Activated T-helper 1 cell treated with anti-CD3 and anti-CD28 coated beads, Interleukin-12 subunit alpha, Interleukin-12 subunit beta, Interleukin-2, Interleukin-4 antibody, amounts not matched to agents 30 ng/mL and 10 ng/mL and 1 ng/mL, durations not matched to agents 14 hours and 24 hours and 36 hours (primary cell): ENCODE measurements at regions of chr6 and their contacts with region 1.

Region 1: DNA sequence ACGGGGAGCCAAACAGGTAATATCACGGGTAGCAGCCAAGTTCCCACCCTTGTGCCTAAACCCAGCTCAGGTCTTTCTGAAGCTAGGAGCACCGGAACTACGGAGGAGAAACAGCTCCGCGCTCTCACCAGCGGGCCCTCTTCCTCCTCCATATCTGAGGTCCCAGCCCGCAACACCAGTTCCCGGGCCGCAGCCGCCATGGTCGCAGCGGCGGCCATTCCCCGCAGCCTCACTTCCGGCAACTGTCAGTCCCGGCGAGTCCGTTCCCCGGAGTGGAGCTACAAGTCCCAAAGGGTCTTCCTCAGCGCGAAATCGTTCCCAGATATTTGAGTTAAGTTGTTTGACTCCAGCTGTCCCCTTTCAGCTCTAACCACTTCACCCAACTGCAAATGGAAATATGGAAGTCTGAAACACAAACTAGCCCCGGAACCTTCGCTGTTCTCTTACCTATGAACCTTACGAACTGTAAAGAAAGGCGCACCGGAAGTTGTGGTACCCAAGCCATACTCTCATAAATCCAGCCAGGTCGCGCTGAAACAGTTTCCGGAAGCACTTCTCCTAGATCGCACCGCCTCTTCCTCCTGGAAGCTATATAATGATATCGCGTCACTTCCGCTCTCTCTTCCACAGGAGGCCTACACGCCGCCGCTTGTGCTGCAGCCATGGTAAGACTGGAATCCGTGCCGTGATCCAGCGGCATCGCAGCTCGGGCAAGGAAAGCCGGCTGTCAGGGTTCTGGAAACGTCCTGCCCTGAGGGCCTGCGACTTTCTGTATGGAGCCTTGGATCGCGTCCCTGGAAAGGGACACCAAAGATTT is at the starts of genes RPS18 and VPS52:
- DNase-seq: peak; percentile 89
- H3K4me3 Mint-ChIP-seq: peak within 1 kb of the TSS; percentile 97
- H3K27ac Mint-ChIP-seq: peak within 1 kb of the TSS; percentile 99
- H3K4me1 Mint-ChIP-seq: peaks cover 55% of the 10 kb centered on the region
- H3K27me3 Mint-ChIP-seq: no peaks in the 10 kb centered on the region
- total RNA-seq, gene RPS18: 2,930 and 2,946 TPM in 2 replicates
- total RNA-seq, gene VPS52: 59.8 and 63.5 TPM in 2 replicates

Region 2: GRCh38 chr6:31971993-31972708 is 1299.5 kb before region 1 on chr6 and contains the start of gene DXO:
- intact Hi-C with region 1: loop called (anchors 10 kb)
- DNase-seq: peak; percentile 97
- H3K4me3 Mint-ChIP-seq: peak within 1 kb of the TSS; percentile 80
- H3K27ac Mint-ChIP-seq: peak within 1 kb of the TSS; percentile 100
- H3K4me1 Mint-ChIP-seq: peaks cover 34% of the 10 kb centered on the region
- H3K27me3 Mint-ChIP-seq: no peaks in the 10 kb centered on the region
- total RNA-seq, gene DXO: 14.1 and 15.2 TPM in 2 replicates

Region 3: DNA sequence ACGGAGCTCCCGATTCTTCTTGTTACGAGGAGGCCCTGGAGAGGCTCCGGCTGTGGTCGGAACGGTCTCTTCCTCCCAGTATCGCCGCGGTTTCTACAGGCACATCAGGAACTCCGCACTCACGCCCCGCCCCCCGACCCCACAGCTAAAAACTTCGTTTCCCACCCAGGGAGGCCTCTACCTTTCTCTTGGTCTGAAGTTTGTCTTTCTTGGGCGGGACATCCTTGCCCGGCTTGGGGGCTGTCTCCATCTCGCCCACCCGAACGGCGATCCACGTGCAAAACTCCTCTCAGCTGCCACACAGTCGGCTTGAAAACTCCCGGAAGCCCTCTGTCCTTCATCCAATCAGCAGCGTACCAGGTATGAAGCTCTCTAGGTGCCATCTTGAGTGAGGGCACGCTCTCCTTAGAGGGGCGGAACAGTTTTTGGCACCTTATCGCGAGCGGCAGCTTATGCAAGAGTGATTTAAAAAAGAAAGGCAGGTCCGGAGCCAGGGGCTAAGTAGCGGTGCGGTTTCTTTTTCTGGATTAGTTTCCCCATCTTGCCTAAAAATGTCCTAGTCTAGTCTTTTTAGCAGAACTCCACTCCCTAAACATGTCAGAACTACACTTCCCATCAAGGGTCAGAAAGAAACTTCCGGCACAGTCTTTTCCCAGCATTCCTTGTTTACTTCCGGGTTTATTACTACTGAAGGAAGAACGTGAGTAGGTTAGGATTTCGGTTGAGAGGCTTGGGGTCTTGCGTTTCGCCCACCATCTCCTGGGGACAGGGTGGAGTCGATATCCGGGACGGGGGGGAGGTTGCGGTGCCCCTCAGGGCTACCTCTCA is 17.5 kb after region 1 on chr6 and contains the starts of genes PFDN6 and WDR46:
- intact Hi-C with region 1: loop called (anchors 1 kb)
- DNase-seq: peak; percentile 83
- H3K4me3 Mint-ChIP-seq: peak within 1 kb of the TSS; percentile 98
- H3K27ac Mint-ChIP-seq: peak within 1 kb of the TSS; percentile 86
- H3K4me1 Mint-ChIP-seq: peaks cover 31% of the 10 kb centered on the region
- H3K27me3 Mint-ChIP-seq: no peaks in the 10 kb centered on the region
- total RNA-seq, gene PFDN6: 122 and 126 TPM in 2 replicates
- total RNA-seq, gene WDR46: 113 and 123 TPM in 2 replicates

Region 4: GRCh38 chr6:33299237-33299944 is 27.7 kb after region 1 on chr6:
- intact Hi-C with region 1: loop called (anchors 1 kb)
- DNase-seq: peak; percentile 92
- H3K4me3 Mint-ChIP-seq: peak overlapping the region; percentile 95
- H3K27ac Mint-ChIP-seq: peak overlapping the region; percentile 99
- H3K4me1 Mint-ChIP-seq: peaks cover 38% of the 10 kb centered on the region
- H3K27me3 Mint-ChIP-seq: no peaks in the 10 kb centered on the region

Region 5: GRCh38 chr6:33312409-33313158 is 40.9 kb after region 1 on chr6:
- intact Hi-C with region 1: no loop called
- DNase-seq: peak; percentile 76
- H3K4me3 Mint-ChIP-seq: peak overlapping the region; percentile 97
- H3K27ac Mint-ChIP-seq: peak overlapping the region; percentile 99
- H3K4me1 Mint-ChIP-seq: peaks cover 60% of the 10 kb centered on the region
- H3K27me3 Mint-ChIP-seq: no peaks in the 10 kb centered on the region

Region 6: GRCh38 chr6:33323623-33323948 is 51.9 kb after region 1 on chr6:
- intact Hi-C with region 1: loop called (anchors 1 kb)
- DNase-seq: no peak
- H3K4me3 Mint-ChIP-seq: peak overlapping the region; percentile 97
- H3K27ac Mint-ChIP-seq: peak overlapping the region; percentile 98
- H3K4me1 Mint-ChIP-seq: peaks cover 55% of the 10 kb centered on the region
- H3K27me3 Mint-ChIP-seq: no peaks in the 10 kb centered on the region

Region 7: GRCh38 chr6:33410050-33410710 is 138.5 kb after region 1 on chr6:
- intact Hi-C with region 1: loop called (anchors 1 kb)
- DNase-seq: peak; percentile 99
- H3K4me3 Mint-ChIP-seq: peak overlapping the region; percentile 91
- H3K27ac Mint-ChIP-seq: peak overlapping the region; percentile 96
- H3K4me1 Mint-ChIP-seq: peaks cover 50% of the 10 kb centered on the region
- H3K27me3 Mint-ChIP-seq: no peaks in the 10 kb centered on the region

Region 8: GRCh38 chr6:33425668-33426577 is 154.3 kb after region 1 on chr6:
- intact Hi-C with region 1: loop called (anchors 5 kb)
- DNase-seq: peak; percentile 72
- H3K4me3 Mint-ChIP-seq: peak overlapping the region; percentile 89
- H3K27ac Mint-ChIP-seq: peak overlapping the region; percentile 92
- H3K4me1 Mint-ChIP-seq: peaks cover 77% of the 10 kb centered on the region
- H3K27me3 Mint-ChIP-seq: no peaks in the 10 kb centered on the region